ENCODE measurements at regions of chr4 and their contacts with region 1.

Region 1: DNA sequence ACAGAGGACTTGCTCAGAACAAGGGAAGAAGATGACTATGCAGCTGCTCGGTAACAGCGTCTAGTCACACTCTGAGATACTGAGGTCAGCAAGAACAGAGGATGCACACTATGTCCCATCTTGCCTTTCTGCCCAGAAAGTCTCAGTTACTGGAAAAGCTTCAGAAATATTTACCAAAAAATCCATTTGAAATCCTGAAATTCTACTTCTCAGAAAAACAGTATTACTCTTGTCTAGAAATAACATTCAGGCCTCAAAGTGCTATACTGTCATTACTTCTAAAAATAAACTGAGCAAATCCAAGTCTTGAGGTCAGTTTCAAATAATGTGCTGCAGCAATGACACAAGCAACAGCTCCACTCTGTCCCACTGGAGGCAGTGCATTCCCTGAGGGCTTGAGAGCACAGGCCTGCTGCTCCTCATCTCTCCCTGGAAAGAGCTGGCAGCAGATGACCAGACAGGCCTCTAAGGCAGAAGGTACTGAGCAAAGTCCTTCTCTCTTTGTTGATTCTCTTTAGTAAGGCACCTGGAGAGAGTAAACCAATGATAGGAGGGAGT is 76.9 kb downstream of the CAMK2D start:
- DNase-seq: peak; percentile 57 to 74
- ATAC-seq: peak; percentile 89
- H3K4me3 ChIP-seq: no peak overlapping the region
- H3K27ac ChIP-seq: peak overlapping the region in 1 of 2 donors; percentile 69
- H3K4me1 ChIP-seq: peaks cover 2 to 8% of the 10 kb centered on the region in 2 donors
- H3K27me3 ChIP-seq: no peaks in the 10 kb centered on the region

Region 2: GRCh38 chr4:113555868-113556267 is 128.7 kb before region 1 on chr4:
- intact Hi-C with region 1: loop called in 1 of 2 experiments (anchors 10 kb)
- DNase-seq: peak in 1 of 2 donors; percentile 65
- ATAC-seq: peak; percentile 86
- H3K4me3 ChIP-seq: peak overlapping the region in 1 of 2 donors; percentile 34
- H3K27ac ChIP-seq: peak overlapping the region; percentile 47 to 94
- H3K4me1 ChIP-seq: peaks cover 4 to 9% of the 10 kb centered on the region in 2 donors
- H3K27me3 ChIP-seq: no peaks in the 10 kb centered on the region

Region 3: GRCh38 chr4:113761620-113762185 is 77.1 kb after region 1 on chr4 and contains the start of gene CAMK2D:
- intact Hi-C with region 1: loop called in 1 of 2 experiments (anchors 5 kb)
- DNase-seq: peak; percentile 91 to 93
- ATAC-seq: peak; percentile 90
- H3K4me3 ChIP-seq: peak within 1 kb of the TSS; percentile 51 to 77
- H3K27ac ChIP-seq: peak within 1 kb of the TSS; percentile 64 to 90
- H3K4me1 ChIP-seq: no peaks in the 10 kb centered on the region
- H3K27me3 ChIP-seq: no peaks in the 10 kb centered on the region
- total RNA-seq, gene CAMK2D: 52.3 to 71.8 TPM